ENCODE measurements at regions of chr1 and their contacts with region 1.

Region 1: DNA sequence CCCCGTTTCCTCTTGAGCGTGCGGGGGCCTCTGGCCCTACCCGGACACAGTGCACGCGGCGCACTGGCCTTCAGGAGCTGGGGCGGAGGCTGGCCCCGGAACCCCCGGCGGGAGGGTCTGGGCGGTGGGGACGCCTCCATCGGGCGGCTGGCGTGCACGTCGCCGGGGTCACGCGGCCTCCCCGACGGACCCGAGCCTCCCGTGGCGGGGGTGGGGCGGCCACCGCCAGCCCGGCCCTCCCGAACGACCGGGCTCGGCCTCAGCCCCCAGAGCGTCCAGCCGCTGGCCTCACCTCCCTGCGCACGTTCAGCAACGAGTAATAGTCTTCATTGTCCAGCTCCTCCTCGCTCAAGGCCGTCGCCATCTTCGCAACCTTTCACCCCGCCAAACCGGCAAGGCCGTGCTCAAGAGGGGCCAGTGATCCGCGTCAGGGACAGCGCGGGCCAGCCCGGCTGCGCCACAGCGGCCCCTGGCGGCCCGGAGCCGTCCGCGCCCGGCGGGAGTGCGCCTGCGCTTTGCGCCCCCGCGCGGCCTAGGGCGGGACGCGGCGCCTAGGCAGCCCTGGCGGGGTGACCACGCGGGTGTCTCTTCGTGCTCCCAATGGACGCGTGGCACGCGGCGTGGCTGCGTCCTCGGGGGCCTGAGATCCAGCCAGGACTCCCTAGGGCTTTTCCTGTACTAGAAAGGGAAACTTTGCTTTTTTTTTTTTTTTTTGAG is at the start of gene DNAJC11:
- DNase-seq: peak; percentile 92
- H3K4me3 Mint-ChIP-seq: peak within 1 kb of the TSS; percentile 92
- H3K27ac Mint-ChIP-seq: peak within 1 kb of the TSS; percentile 85
- H3K4me1 Mint-ChIP-seq: peaks cover 41% of the 10 kb centered on the region
- H3K27me3 Mint-ChIP-seq: no peaks in the 10 kb centered on the region
- total RNA-seq, gene DNAJC11: 27.4 to 27.9 TPM

Region 2: DNA sequence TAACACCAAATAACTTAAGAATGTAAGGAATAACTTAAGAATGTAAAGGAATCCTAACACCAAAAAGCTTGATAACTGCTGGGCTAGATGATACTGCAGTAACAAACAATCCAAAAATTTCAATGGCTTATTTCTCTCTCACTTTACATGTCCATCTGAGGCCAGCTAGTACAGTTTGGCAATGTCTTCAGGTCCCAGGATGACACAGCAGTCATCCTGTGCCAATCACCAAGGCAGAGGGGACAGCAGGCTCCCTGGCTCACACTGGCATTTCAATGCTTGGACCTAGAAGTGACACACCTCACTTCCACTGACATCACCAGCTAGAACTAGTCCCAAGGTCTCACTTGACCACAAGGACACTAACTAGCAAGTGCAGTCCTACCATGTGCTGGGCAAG is 15.3 kb before region 1 on chr1:
- CTCF ChIA-PET with region 1: interaction called, 14 read pairs
- POLR2A ChIA-PET with region 1: interaction called, 4 read pairs
- DNase-seq: no peak
- H3K4me3 Mint-ChIP-seq: no peak overlapping the region
- H3K27ac Mint-ChIP-seq: no peak overlapping the region
- H3K4me1 Mint-ChIP-seq: peaks cover 14% of the 10 kb centered on the region
- H3K27me3 Mint-ChIP-seq: no peaks in the 10 kb centered on the region

Region 3: GRCh38 chr1:6794164-6794563 is 92.6 kb after region 1 on chr1:
- CTCF ChIA-PET with region 1: no interaction called
- POLR2A ChIA-PET with region 1: no interaction called
- DNase-seq: no peak
- H3K4me3 Mint-ChIP-seq: no peak overlapping the region
- H3K27ac Mint-ChIP-seq: no peak overlapping the region
- H3K4me1 Mint-ChIP-seq: peaks cover 3% of the 10 kb centered on the region
- H3K27me3 Mint-ChIP-seq: no peaks in the 10 kb centered on the region

Measured in activated CD4-positive, alpha-beta memory T cell treated with anti-CD3 and anti-CD28 coated beads, Interleukin-2, amount 10 ng/mL, durations not matched to agents 7 days and 5 days (primary cell).